Gastrocnemius medialis (tissue), 4 donors: ENCODE measurements at regions of chr11 and their contacts with region 1.

Region 1: DNA sequence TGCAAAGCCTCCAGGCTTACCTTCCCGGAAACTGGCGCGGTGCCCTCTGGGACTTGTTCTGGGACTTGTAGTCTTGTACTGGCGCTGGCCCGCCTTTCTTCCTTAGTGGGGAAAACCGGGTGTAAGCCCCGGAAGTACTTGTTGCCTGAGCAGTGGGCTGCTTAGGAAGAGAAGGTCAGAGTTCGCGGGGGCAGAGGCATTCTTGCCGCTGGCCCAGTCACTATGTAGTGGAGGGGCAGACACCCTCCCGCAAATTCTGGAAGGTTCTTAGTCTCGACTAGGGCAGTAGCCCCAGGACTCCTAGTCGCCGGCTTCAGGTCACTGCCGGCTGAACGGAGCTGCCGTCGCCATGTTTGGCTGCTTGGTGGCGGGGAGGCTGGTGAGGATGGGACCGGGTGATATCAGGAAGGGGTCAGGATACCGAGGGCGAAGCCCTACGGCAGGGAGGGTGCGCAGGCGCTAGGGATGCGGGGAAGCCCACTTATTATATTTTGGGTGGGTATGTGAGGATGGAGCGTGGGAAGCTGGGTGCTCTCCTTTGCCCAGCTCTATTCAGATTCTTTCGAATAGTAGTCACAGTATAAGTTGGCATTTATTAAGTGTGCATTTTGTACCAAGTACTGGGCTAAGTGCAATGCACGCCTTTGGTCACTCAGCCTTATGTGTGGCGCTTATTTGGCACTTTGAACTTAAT is at the start of gene HIKESHI:
- DNase-seq: peak; percentile 99
- ATAC-seq: peak; percentile 99 to 100
- H3K4me3 ChIP-seq: peak within 1 kb of the TSS; percentile 65 to 100 (median 78)
- H3K27ac ChIP-seq: peak within 1 kb of the TSS; percentile 83 to 94 (median 86)
- H3K4me1 ChIP-seq: peaks cover 14 to 28% of the 10 kb centered on the region in 2 donors
- H3K27me3 ChIP-seq: no peaks in the 10 kb centered on the region
- CTCF ChIP-seq: peak in 1 of 5 experiments; percentile 6
- POLR2A ChIP-seq: peak; percentile 43 to 52
- total RNA-seq, gene HIKESHI: 30.1 to 60.9 (median 51.8) TPM

Region 2: GRCh38 chr11:85854557-85855340 is 447.5 kb before region 1 on chr11:
- in situ Hi-C with region 1: no loop called
- intact Hi-C with region 1: loop called (anchors 10 kb)
- DNase-seq: peak; percentile 68 to 85
- ATAC-seq: peak; percentile 94 to 96
- H3K4me3 ChIP-seq: peak overlapping the region; percentile 54 to 71 (median 61)
- H3K27ac ChIP-seq: peak overlapping the region; percentile 78 to 91 (median 80)
- H3K4me1 ChIP-seq: peaks cover 4 to 5% of the 10 kb centered on the region in 2 donors
- H3K27me3 ChIP-seq: no peaks in the 10 kb centered on the region
- CTCF ChIP-seq: peak; percentile 84 to 99 (median 93)
- POLR2A ChIP-seq: peak in 1 of 2 donors; percentile 35